T-cell (primary cell): ENCODE measurements at regions of chr16 and their contacts with region 1.

Region 1: DNA sequence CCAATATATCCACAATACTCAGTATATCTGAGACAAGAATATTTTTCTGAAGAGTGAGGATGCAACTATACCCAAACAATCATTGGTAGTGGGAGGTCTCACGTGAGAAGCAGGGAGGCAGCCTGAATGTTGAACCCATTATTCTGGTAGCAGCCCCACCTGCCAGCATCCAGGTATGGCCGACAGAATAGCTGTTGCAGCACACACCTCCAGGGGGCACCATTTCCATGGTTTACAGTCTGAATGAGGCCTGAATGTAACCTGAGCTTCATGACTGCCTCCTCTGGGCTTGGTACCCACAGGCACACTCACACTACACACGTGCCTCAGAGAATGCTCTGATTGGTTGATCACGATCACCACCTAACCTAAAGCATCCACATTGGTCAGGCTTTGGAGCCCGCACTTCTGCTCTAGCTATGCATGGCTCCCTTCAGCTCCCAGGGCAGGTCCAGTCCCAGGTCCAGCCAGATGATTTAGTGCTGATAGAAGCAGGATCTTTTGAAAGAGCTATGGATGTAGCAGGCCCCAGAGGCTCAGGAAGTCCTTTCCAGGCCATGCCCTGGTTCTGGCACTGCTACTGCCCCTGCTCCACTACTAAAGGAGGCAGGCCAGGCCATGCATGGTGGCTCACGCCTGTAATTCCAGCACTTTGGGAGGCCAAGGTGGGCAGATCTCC is 11.0 kb upstream of the CBFB start:
- DNase-seq: peak; percentile 62 to 90 (median 78)
- ATAC-seq: peak; percentile 72 to 90 (median 76)
- H3K4me3 ChIP-seq: no peak overlapping the region
- H3K4me3 Mint-ChIP-seq: no peak overlapping the region
- H3K27ac ChIP-seq: no peak overlapping the region
- H3K27ac Mint-ChIP-seq: no peak overlapping the region
- H3K4me1 ChIP-seq: peaks cover 0 to 15% of the 10 kb centered on the region in 2 experiments
- H3K4me1 Mint-ChIP-seq: peaks cover 5 to 17% (median 14%) of the 10 kb centered on the region in 3 donors
- H3K27me3 ChIP-seq: peaks cover 0 to 20% of the 10 kb centered on the region in 2 experiments
- H3K27me3 Mint-ChIP-seq: no peaks in the 10 kb centered on the region

Region 2: GRCh38 chr16:66947302-66948065 is 70.5 kb before region 1 on chr16:
- CTCF ChIA-PET with region 1: no interaction called
- POLR2A ChIA-PET with region 1: no interaction called
- DNase-seq: peak; percentile 53 to 91 (median 80)
- ATAC-seq: peak; percentile 85 to 90 (median 88)
- H3K4me3 ChIP-seq: peak overlapping the region; percentile 54 to 79
- H3K4me3 Mint-ChIP-seq: peak overlapping the region; percentile 84 to 87 (median 87)
- H3K27ac ChIP-seq: no peak overlapping the region
- H3K27ac Mint-ChIP-seq: peak overlapping the region in 1 of 2 donors; percentile 47
- H3K4me1 ChIP-seq: peaks cover 5 to 23% of the 10 kb centered on the region in 2 experiments
- H3K4me1 Mint-ChIP-seq: peaks cover 17 to 25% (median 18%) of the 10 kb centered on the region in 3 donors
- H3K27me3 ChIP-seq: peaks cover 7 to 35% of the 10 kb centered on the region in 2 experiments
- H3K27me3 Mint-ChIP-seq: peaks cover 25 to 35% of the 10 kb centered on the region in 2 donors

Region 3: DNA sequence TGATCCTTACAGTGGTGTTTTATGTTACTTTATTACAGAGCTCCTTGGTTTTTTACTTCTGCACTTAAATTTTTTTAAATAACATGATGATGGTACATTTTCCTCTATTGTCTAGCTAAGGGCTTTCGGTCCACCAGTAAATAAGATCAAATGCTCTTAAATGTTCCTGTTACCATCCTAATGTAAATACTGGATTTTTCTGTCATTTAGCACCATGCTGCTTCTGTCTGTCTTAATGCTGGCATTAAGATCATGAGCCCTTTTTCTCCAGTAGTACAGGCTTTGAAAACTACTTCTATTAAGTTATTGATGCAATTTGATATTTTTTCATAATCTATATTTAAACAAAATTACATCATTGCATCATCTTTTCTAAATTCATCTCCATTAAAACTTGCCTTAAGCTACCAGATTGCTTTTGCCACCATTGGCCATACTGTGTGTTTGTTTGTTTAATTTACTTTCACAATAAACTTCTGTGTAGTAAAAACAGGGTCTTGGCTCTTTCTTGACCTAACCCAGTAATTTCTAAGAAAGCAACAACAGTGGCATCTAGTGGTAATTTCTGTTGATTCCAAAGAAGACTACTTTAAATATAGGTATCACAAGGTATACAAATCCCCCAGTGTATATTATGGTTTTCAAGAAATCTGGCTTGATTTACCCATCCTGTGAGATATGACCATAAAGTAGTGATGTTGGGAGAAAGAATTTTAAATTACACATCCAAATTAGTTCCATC is 82.8 kb after region 1 on chr16:
- CTCF ChIA-PET with region 1: interaction called, 7 to 12 read pairs
- POLR2A ChIA-PET with region 1: interaction called in 1 of 2 experiments, 5 read pairs
- DNase-seq: peak in 1 of 35 experiments; percentile 50
- ATAC-seq: peak in 1 of 4 experiments; percentile 38
- H3K4me3 ChIP-seq: no peak overlapping the region
- H3K4me3 Mint-ChIP-seq: no peak overlapping the region
- H3K27ac ChIP-seq: no peak overlapping the region
- H3K27ac Mint-ChIP-seq: no peak overlapping the region
- H3K4me1 ChIP-seq: no peaks in the 10 kb centered on the region
- H3K4me1 Mint-ChIP-seq: peaks cover 0 to 2% (median 0%) of the 10 kb centered on the region in 3 donors
- H3K27me3 ChIP-seq: no peaks in the 10 kb centered on the region
- H3K27me3 Mint-ChIP-seq: no peaks in the 10 kb centered on the region

Region 4: DNA sequence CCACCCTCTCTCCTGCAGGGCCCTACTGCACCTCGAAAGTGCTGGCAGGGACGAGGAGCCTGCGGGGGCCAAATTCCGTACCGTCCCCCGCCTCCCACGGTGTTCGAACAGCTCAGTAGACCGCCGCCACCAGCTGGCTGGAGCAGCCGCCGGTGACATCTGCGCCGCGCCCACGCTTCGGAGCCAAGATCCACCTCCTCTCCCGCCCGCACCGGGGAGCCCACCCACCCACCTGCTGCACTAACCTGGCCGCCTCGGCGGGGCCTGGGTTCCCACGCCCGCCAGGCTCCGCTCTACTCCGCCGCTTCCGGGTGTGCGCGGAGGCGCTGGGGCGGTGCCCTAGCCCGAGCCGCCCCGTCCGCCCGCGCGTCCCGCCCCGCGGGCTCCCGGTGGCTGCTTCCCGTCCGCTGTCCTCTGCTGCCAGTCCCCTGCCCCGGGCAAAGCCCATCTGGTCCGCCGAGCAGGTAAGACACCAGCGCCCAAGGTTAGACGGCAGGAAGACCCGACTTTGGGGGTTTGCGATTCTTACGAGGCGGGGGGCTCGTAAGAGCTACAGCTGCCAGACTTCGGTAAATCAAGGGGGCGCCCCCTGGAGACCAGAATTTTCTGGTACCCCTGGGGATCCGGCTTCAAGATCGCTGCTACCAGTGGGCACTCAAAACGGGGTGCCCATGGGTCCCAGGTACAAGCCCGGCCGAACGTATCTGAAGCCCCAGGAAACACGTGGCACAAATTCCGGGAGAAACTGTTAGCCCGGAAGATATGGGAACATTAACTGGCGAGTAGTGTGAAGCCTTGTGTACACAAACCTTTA is 141.9 kb after region 1 on chr16 and contains the starts of genes FBXL8 and TRADD:
- CTCF ChIA-PET with region 1: interaction called, 3 to 24 read pairs
- POLR2A ChIA-PET with region 1: interaction called in 1 of 2 experiments, 6 read pairs
- DNase-seq: peak; percentile 53 to 88 (median 74)
- ATAC-seq: peak; percentile 72 to 75 (median 74)
- H3K4me3 ChIP-seq: peak within 1 kb of the TSS; percentile 96 to 97
- H3K4me3 Mint-ChIP-seq: peak within 1 kb of the TSS; percentile 87 to 93 (median 92)
- H3K27ac ChIP-seq: peak within 1 kb of the TSS; percentile 98
- H3K27ac Mint-ChIP-seq: peak within 1 kb of the TSS; percentile 97 to 100
- H3K4me1 ChIP-seq: peaks cover 31 to 95% of the 10 kb centered on the region in 2 experiments
- H3K4me1 Mint-ChIP-seq: peaks cover 43 to 65% (median 58%) of the 10 kb centered on the region in 3 donors
- H3K27me3 ChIP-seq: peaks cover 6 to 42% of the 10 kb centered on the region in 2 experiments
- H3K27me3 Mint-ChIP-seq: peaks cover 10 to 16% of the 10 kb centered on the region in 2 donors
- total RNA-seq, gene FBXL8: 18.5 to 69.7 (median 43.7) TPM
- total RNA-seq, gene TRADD: 58.3 to 179 (median 123) TPM

Region 5: DNA sequence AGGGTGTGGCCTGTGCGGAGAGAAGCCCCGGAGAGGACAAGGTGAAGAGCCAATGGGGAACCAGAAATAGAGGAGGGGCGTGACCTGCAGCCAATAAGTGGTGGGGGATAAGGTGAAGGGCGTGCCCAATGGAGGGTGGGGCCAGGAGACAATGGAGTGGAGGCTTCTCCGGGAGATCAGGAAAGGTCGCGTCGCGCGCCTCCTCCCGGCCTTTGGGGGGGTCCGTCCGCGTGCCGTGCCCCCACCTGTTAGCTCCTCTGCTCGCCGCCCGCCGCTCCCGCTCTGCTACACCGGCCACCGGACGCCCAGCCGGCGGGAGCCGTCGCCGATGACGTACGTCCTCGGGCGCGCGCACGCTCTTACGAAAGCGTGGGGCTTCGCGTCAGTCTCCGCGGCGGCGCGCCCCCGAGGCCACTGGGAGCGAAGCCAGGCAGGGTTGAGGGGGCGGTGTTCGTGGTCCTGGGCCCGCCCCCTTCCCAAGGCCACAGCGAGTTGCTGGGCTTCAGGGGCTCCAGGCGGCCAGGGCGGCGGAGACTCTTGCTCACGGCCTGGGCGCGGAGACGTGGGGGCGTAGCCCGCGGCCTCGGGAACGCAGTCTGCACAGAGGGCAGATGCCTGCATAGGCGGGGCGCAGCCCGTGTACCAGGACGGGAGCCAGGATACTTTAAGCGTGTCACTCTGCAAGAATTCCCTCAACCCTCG is 165.8 kb after region 1 on chr16 and contains the start of gene MATCAP1:
- CTCF ChIA-PET with region 1: interaction called in 1 of 2 experiments, 10 read pairs
- POLR2A ChIA-PET with region 1: no interaction called
- DNase-seq: peak; percentile 83 to 97 (median 94)
- ATAC-seq: peak; percentile 92 to 95 (median 92)
- H3K4me3 ChIP-seq: peak within 1 kb of the TSS; percentile 76 to 80
- H3K4me3 Mint-ChIP-seq: peak within 1 kb of the TSS in 1 of 3 donors; percentile 82
- H3K27ac ChIP-seq: peak within 1 kb of the TSS; percentile 84
- H3K27ac Mint-ChIP-seq: no peak within 1 kb of the TSS
- H3K4me1 ChIP-seq: peaks cover 4 to 27% of the 10 kb centered on the region in 2 experiments
- H3K4me1 Mint-ChIP-seq: peaks cover 14 to 18% (median 16%) of the 10 kb centered on the region in 3 donors
- H3K27me3 ChIP-seq: peaks cover 0 to 43% of the 10 kb centered on the region in 2 experiments
- H3K27me3 Mint-ChIP-seq: peaks cover 2 to 8% of the 10 kb centered on the region in 2 donors
- total RNA-seq, gene MATCAP1: 11.3 to 16.5 (median 14.8) TPM

Region 6: DNA sequence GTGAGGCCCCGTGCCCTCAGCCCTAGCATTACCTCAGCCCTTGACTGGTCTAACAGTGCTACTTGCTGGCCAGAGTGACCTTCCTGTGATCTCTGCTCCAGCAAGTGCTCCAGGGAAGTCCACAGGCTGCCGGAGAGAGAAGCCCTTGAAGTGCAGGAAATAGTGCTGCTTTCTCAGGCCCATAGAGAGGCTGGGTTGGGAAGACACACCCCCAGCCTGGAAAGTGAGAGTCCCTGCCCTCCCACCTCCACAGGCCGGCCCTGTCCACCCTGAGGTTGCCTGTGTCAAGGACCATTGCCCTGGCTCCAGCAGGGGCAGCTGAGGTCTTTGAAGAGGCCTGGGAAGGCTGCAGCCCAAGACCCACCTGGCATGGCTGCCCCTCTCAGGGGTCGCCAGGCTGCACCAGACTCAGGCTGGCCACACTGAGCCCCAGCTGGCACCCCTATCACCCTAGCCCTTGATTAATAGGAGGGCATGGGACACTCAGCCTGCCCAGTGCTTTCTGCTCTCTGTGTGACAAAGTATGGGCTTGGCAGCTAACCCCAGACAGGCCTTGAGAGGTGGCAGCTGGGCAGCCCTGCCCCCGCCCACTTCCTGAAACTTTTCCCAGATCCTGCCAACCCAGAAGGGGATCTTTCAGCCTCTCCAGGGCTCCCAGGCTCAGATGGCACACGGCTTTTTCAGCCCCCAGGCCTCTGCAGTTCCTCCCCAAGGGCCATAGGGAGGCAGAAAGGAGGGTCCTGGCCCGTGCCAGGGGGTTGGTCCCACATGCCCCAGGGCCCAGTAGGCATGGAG is 441.3 kb after region 1 on chr16:
- CTCF ChIA-PET with region 1: no interaction called
- POLR2A ChIA-PET with region 1: interaction called in 1 of 2 experiments, 13 read pairs
- DNase-seq: no peak
- ATAC-seq: no peak
- H3K4me3 ChIP-seq: no peak overlapping the region
- H3K4me3 Mint-ChIP-seq: no peak overlapping the region
- H3K27ac ChIP-seq: no peak overlapping the region
- H3K27ac Mint-ChIP-seq: peak overlapping the region in 1 of 2 donors; percentile 28
- H3K4me1 ChIP-seq: peaks cover 0 to 47% of the 10 kb centered on the region in 2 experiments
- H3K4me1 Mint-ChIP-seq: peaks cover 18 to 54% (median 40%) of the 10 kb centered on the region in 3 donors
- H3K27me3 ChIP-seq: no peaks in the 10 kb centered on the region
- H3K27me3 Mint-ChIP-seq: no peaks in the 10 kb centered on the region

Region 7: GRCh38 chr16:67632415-67633172 is 614.6 kb after region 1 on chr16:
- CTCF ChIA-PET with region 1: interaction called in 1 of 2 experiments, 11 read pairs
- POLR2A ChIA-PET with region 1: no interaction called
- DNase-seq: no peak
- ATAC-seq: no peak
- H3K4me3 ChIP-seq: no peak overlapping the region
- H3K4me3 Mint-ChIP-seq: no peak overlapping the region
- H3K27ac ChIP-seq: no peak overlapping the region
- H3K27ac Mint-ChIP-seq: peak overlapping the region in 1 of 2 donors; percentile 49
- H3K4me1 ChIP-seq: no peaks in the 10 kb centered on the region
- H3K4me1 Mint-ChIP-seq: no peaks in the 10 kb centered on the region
- H3K27me3 ChIP-seq: no peaks in the 10 kb centered on the region
- H3K27me3 Mint-ChIP-seq: no peaks in the 10 kb centered on the region